ENCODE measurements at regions of chr1 and their contacts with region 1.

Region 1: DNA sequence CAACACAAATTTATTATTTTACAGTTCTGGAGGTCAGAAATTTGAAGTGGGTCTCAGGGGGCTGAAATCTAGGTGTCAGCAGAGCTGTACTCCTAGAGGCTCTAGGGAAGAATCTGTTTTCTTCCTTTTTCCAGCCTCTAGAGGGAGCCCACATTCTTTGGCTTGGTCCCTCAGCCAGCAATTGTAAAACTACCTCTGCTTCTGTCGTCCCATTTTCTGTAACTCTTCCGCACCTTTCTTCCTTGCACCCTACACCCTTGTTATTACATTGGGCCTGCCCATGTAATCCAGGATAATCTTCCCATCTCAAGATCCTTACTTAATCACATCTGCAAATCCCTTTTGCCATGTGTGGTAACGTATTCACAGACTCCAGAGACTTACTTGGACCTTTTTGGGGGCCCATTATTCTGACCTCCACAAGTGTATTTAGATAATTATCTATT is 24.8 kb upstream of the THEM4 start:
- DNase-seq: peak in 2 of 4 donors; percentile 55 to 75
- ATAC-seq: peak; percentile 98
- H3K4me3 ChIP-seq: no peak overlapping the region
- H3K27ac ChIP-seq: no peak overlapping the region
- H3K4me1 ChIP-seq: no peaks in the 10 kb centered on the region
- H3K27me3 ChIP-seq: no peaks in the 10 kb centered on the region
- CTCF ChIP-seq: peak; percentile 70 to 91

Region 2: GRCh38 chr1:151820940-151821339 is 113.1 kb before region 1 on chr1:
- intact Hi-C with region 1: no loop called
- DNase-seq: no peak
- ATAC-seq: no peak
- H3K4me3 ChIP-seq: no peak overlapping the region
- H3K27ac ChIP-seq: no peak overlapping the region
- H3K4me1 ChIP-seq: peaks cover 0 to 8% of the 10 kb centered on the region in 2 donors
- H3K27me3 ChIP-seq: no peaks in the 10 kb centered on the region
- CTCF ChIP-seq: no peak

Region 3: GRCh38 chr1:151993654-151994496 is 59.8 kb after region 1 on chr1 and contains the start of gene S100A10:
- intact Hi-C with region 1: loop called (anchors 2 to 10 kb)
- DNase-seq: peak; percentile 60 to 94 (median 88)
- ATAC-seq: peak; percentile 76
- H3K4me3 ChIP-seq: peak within 1 kb of the TSS; percentile 79 to 84
- H3K27ac ChIP-seq: peak within 1 kb of the TSS; percentile 98
- H3K4me1 ChIP-seq: peaks cover 33 to 65% of the 10 kb centered on the region in 2 donors
- H3K27me3 ChIP-seq: peaks cover 0 to 30% of the 10 kb centered on the region in 2 donors
- CTCF ChIP-seq: no peak
- polyA plus RNA-seq, gene S100A10: 415 to 615 (median 485) TPM

Measured in left lung (tissue), 14 donors.